ENCODE measurements at regions of chr1 and their contacts with region 1.

Region 1: DNA sequence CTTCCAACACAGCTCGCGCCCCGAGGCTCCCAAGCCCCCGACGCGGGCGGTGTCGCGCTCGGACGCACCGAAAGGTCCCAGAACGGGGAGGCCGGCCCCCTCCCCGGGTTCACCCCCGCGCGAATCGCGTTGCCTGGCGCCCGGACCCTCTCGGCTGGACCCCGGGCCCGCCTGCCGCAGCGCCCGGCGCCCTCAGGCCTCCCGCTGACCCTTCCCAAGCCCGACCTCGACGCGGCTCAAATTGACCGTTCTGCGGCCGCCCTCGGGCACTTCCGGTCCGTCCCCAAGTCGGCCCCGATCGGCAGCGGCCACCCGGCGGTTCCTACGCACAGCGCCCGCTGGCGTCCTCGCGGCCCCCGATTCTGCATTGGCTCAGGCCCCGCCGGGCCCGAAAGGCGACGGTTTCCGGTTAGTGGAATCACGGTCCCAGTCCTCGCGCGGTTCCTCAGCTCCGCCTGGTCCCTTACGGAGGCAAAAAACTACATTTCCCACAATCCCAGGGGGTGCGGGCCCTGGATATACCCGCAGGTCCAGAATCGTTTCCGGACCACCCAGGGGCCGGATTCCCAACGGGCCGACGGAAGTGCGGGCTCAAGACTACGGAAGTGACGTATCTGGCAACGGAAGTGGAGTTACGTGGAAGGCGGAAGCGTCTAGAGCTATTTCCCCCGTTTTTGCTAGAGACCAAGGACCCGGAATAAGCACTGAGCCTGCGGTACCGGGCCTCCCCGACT is at the start of gene AURKAIP1:
- DNase-seq: peak; percentile 83 to 99 (median 96)
- ATAC-seq: peak; percentile 64 to 77
- H3K4me3 Mint-ChIP-seq: peak within 1 kb of the TSS; percentile 87 to 97 (median 93)
- H3K27ac Mint-ChIP-seq: peak within 1 kb of the TSS; percentile 91 to 99 (median 97)
- H3K4me1 Mint-ChIP-seq: peaks cover 9 to 42% (median 24%) of the 10 kb centered on the region in 4 donors
- H3K27me3 Mint-ChIP-seq: no peaks in the 10 kb centered on the region
- polyA plus RNA-seq, gene AURKAIP1: 146 to 169 (median 168) TPM

Region 2: GRCh38 chr1:1349256-1350012 is 25.7 kb before region 1 on chr1 and contains the start of gene DVL1:
- POLR2A ChIA-PET with region 1: interaction called, 105 read pairs
- DNase-seq: peak; percentile 42 to 92 (median 76)
- ATAC-seq: peak; percentile 82
- H3K4me3 Mint-ChIP-seq: peak within 1 kb of the TSS; percentile 55 to 88 (median 74)
- H3K27ac Mint-ChIP-seq: peak within 1 kb of the TSS in 9 of 10 donors; percentile 9 to 90 (median 71)
- H3K4me1 Mint-ChIP-seq: peaks cover 18 to 42% (median 35%) of the 10 kb centered on the region in 4 donors
- H3K27me3 Mint-ChIP-seq: peaks cover 0 to 10% (median 0%) of the 10 kb centered on the region in 5 donors
- polyA plus RNA-seq, gene DVL1: 0.99 to 2.0 (median 1.4) TPM

Region 3: DNA sequence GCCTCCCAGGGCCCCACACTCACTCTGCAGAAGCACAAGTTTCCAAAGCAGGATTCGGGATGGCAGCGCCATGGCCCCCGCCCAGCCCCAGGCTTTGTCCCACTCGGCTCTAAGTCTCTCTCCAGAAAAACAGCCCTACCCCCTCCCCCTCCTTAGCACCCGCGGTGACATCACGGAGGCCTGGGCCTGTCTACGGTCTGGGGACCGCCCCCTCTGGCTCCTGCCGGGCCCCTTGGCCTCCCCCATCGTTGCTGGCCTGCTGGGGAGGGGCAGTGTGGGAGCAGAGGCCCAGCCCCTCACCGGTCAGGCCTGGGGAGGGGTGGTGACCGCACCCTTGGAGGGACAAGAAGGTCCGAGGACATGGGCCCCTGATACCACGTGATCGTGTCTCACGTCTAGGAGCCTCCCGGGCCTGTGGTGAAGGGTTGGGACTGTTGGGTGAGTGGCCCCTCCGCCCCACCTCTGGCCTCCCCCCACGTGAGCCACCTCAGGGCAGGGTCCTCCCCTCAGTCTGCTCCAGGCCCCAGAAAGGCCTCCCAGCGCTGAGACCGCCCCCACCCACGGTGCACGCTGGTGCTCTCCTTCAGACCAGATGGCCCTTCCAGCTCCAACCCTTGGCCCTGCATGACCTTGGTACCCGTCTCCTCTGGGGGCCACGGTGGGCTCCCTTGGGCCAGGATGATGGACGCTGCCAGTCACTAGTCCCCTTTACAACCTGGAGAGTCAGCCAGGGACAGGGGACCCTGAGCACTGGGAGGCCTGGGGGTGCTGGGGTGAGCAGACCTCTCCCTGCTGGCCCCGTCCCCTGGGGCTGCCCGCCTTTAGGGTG is 16.4 kb before region 1 on chr1 and contains the start of gene MXRA8:
- POLR2A ChIA-PET with region 1: interaction called, 105 read pairs
- DNase-seq: peak in 1 of 10 donors; percentile 7
- ATAC-seq: peak; percentile 21 to 29
- H3K4me3 Mint-ChIP-seq: peak within 1 kb of the TSS; percentile 34 to 82 (median 78)
- H3K27ac Mint-ChIP-seq: peak within 1 kb of the TSS; percentile 70 to 94 (median 88)
- H3K4me1 Mint-ChIP-seq: peaks cover 13 to 39% (median 31%) of the 10 kb centered on the region in 4 donors
- H3K27me3 Mint-ChIP-seq: peaks cover 0 to 8% (median 0%) of the 10 kb centered on the region in 5 donors
- polyA plus RNA-seq, gene MXRA8: 7.4 to 22.0 (median 19.7) TPM

Region 4: GRCh38 chr1:1399187-1399871 is 24.2 kb after region 1 on chr1 and contains the start of gene CCNL2:
- POLR2A ChIA-PET with region 1: interaction called, 70 read pairs
- DNase-seq: peak; percentile 97 to 99 (median 99)
- ATAC-seq: peak; percentile 93 to 95
- H3K4me3 Mint-ChIP-seq: peak within 1 kb of the TSS; percentile 86 to 95 (median 89)
- H3K27ac Mint-ChIP-seq: peak within 1 kb of the TSS; percentile 85 to 96 (median 92)
- H3K4me1 Mint-ChIP-seq: peaks cover 17 to 60% (median 50%) of the 10 kb centered on the region in 4 donors
- H3K27me3 Mint-ChIP-seq: no peaks in the 10 kb centered on the region
- polyA plus RNA-seq, gene CCNL2: 13.4 to 28.1 (median 13.7) TPM

Region 5: DNA sequence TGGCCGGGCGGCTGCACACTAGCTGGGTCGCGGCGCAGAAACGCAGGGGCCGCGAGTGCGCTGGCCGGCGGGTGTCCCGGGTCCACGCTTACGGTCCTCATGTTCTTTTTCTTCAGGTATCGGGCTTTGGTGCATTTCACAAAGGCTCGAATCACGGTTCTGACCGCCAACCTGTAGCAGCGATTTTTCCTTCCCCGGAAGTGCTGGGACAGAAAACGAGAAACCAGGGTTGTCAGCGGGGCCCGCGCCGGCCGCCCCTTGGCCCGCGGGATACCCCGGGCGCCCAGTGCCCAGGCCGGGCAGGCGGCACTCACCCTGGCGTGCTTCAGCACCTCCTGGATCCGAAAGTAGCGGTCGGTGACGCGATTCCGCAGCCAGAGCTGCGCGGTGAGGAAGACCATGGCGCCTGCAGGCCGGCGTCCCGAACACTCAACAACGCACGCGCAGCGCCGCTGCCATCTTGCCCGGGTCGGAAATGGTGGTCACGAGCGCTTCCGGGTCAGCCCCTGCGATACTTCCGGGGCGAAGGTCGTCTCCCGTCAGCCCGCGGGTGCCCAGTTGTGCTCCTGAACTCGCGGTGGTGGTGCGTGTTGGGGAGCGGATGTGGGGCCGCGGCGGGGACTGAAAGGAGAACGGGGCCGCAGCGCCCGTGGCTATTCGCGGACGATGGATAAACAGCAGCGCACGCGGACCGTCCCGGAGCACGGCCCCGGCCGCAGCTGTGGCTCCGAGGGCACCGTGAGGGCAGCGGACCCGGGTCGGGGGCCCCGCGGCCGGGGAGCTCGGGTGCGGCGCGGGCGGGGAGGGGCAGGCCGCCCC is 31.9 kb after region 1 on chr1 and contains the start of gene MRPL20:
- POLR2A ChIA-PET with region 1: interaction called, 70 read pairs
- DNase-seq: peak; percentile 90 to 98 (median 94)
- ATAC-seq: peak; percentile 94 to 95
- H3K4me3 Mint-ChIP-seq: peak within 1 kb of the TSS; percentile 88 to 97 (median 92)
- H3K27ac Mint-ChIP-seq: peak within 1 kb of the TSS; percentile 89 to 98 (median 96)
- H3K4me1 Mint-ChIP-seq: peaks cover 17 to 57% (median 37%) of the 10 kb centered on the region in 4 donors
- H3K27me3 Mint-ChIP-seq: no peaks in the 10 kb centered on the region
- polyA plus RNA-seq, gene MRPL20: 203 to 233 (median 224) TPM